ENCODE measurements at regions of chr9 and their contacts with region 1.

Region 1: DNA sequence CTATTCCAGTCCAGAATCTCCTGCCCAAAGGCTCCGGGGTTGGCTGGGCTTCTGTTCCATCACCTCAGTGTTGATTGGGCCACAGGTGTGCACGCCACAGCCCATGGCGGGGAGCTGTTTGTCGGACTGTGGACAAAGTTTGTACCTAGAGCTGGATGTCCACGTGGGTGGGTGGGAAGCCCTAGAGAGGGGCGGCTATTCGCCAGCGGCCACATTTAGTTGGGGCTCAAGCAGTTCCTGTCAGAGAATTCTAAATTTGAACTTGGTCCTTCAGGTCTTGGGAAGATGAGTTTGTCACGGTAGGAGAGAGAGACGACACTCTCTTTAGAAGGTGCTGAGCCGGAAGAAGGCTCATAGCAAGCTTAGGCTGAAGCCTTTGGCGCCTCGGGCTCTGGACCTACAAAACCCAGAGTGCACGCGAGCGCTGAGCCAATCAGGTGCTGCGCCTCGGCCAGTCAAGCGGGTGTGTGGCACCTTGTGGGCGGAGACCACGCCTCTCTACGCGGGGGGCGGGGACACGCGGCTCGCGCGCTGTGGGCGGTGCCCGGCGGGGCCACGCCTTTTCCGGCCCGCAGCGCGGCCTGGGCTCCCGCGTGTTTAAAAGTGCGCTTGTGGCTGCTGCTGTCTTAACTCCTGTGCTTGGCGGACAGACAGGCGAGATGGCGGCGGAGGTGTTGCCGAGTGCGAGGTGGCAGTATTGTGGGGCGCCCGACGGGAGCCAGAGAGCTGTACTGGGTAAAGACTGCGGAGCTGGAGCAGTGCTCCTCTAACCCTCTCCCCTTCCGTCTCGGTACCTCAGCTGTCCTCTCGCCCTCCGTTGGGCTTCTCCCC is at the start of gene POLR1E:
- DNase-seq: peak; percentile 94
- ATAC-seq: peak; percentile 91
- H3K4me3 ChIP-seq: peak within 1 kb of the TSS; percentile 90
- H3K27ac ChIP-seq: peak within 1 kb of the TSS; percentile 38
- H3K4me1 ChIP-seq: peaks cover 28% of the 10 kb centered on the region
- H3K27me3 ChIP-seq: no peaks in the 10 kb centered on the region
- CTCF ChIP-seq: no peak
- total RNA-seq, gene POLR1E: 37.0 and 37.2 TPM in 2 replicates

Region 2: DNA sequence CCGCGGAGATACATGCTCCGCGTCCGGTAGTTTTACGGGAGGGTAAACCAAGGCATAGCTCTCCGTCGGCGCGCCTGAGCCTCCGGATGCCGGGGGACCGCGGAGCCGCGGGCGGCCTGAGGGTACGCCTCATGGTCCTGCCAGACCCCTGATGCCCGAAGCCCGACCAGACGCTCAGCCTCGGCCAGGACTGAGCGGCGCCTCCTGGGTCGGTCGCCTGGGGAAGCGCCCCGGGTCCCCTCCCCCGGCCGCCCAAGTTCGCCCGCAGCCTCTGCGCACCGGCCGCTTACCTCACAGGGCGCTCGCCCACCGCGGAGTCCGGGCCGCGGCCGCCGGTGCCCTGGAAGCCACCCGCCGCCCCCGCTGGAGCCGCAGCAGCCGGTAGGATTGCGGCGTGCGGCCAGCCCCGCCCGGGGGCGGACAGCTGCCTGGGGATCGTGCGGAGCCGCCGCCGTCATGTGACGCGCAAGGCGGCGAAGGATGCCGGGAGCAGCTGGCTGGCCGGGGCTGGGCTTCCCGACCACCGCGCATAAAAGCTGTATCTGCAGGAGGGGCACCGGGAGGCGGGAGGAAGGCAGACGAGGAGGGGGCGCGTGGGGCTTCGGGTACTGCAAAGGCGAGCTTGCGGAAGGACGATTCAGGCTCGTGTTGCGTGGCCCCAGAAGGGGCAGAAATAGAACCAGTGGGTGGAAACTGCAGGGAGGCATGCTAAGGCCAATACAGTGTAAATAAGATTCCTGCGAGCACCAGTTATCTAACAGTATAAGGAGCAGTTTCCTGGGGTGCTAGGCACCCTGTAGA is 90.5 kb after region 1 on chr9 and contains the start of gene FBXO10:
- CTCF ChIA-PET with region 1: no interaction called
- POLR2A ChIA-PET with region 1: no interaction called
- intact Hi-C with region 1: loop called (anchors 10 kb)
- DNase-seq: peak; percentile 36
- ATAC-seq: peak; percentile 82
- H3K4me3 ChIP-seq: peak within 1 kb of the TSS; percentile 70
- H3K27ac ChIP-seq: no peak within 1 kb of the TSS
- H3K4me1 ChIP-seq: no peaks in the 10 kb centered on the region
- H3K27me3 ChIP-seq: no peaks in the 10 kb centered on the region
- CTCF ChIP-seq: no peak
- total RNA-seq, gene FBXO10: 2.6 and 5.1 TPM in 2 replicates

Region 3: DNA sequence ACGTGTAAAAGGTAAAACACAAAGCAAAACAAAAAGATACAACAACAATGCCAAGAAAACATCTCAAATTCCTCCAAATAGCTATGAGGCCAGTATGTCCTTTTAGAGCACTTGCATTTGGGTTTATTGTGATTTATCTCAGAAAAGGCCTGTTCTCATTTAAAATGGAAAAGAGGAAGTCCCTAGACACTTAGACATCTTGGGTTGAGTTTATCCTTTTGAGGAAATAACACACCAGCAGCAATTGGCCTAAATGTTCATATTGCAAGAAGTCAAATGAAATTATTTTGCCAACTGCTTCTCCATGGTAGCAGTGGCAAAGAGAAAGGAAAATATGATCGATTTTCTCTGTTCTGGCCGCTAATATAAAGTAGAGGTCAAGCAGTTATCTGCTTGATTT is 224.4 kb after region 1 on chr9:
- CTCF ChIA-PET with region 1: no interaction called
- POLR2A ChIA-PET with region 1: no interaction called
- intact Hi-C with region 1: no loop called
- DNase-seq: no peak
- ATAC-seq: no peak
- H3K4me3 ChIP-seq: no peak overlapping the region
- H3K27ac ChIP-seq: no peak overlapping the region
- H3K4me1 ChIP-seq: no peaks in the 10 kb centered on the region
- H3K27me3 ChIP-seq: peaks cover 25% of the 10 kb centered on the region
- CTCF ChIP-seq: no peak

Region 4: DNA sequence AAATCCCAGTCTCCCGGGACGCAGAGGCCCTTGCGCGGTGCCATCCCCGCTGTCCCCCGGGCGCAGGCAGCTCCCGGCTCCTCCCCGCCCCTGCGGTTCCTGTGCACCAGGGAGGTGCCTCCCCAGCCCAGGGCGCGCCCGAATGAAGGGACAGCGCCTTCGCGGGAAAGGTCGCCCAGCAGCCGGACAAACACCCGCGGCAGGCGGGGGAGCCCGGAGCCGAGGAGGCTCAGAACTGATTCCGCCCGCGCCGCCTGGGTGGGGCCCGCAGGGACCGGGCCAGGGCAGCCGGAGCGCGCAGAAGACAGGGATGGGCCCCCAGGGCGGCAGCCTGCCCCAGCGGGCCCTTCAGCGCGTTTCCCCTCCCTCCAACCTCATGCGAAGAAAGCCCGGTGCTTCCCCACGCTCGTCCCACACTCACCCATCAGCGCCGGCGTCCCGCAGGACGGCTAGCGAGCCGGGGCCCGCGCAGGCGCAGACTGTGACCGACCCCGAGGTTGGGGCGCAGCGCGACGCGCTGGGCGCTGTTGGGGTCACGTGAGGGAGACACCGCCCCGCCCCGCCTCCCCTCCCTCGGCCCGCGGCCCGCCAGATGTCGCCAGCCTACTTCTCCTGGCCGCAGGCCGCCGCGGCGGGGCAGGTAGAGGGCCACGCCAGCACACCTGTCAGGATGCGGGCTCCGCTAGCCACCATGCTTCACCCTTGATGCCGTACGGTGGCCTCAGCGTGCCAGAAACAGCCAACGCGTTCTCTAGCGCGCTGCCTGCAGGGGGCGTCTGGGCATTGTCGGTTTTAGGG is 418.2 kb after region 1 on chr9 and contains the start of gene SLC25A51:
- CTCF ChIA-PET with region 1: no interaction called
- POLR2A ChIA-PET with region 1: no interaction called
- intact Hi-C with region 1: loop called (anchors 10 kb)
- DNase-seq: peak; percentile 89
- ATAC-seq: peak; percentile 78
- H3K4me3 ChIP-seq: peak within 1 kb of the TSS; percentile 93
- H3K27ac ChIP-seq: peak within 1 kb of the TSS; percentile 71
- H3K4me1 ChIP-seq: peaks cover 19% of the 10 kb centered on the region
- H3K27me3 ChIP-seq: no peaks in the 10 kb centered on the region
- CTCF ChIP-seq: peak; percentile 85
- total RNA-seq, gene SLC25A51: 24.1 and 30.6 TPM in 2 replicates

Region 5: GRCh38 chr9:38277601-38278200 is 792.1 kb after region 1 on chr9:
- CTCF ChIA-PET with region 1: interaction called, 10 read pairs
- POLR2A ChIA-PET with region 1: no interaction called
- intact Hi-C with region 1: no loop called
- DNase-seq: peak; percentile 9
- ATAC-seq: no peak
- H3K4me3 ChIP-seq: no peak overlapping the region
- H3K27ac ChIP-seq: no peak overlapping the region
- H3K4me1 ChIP-seq: no peaks in the 10 kb centered on the region
- H3K27me3 ChIP-seq: no peaks in the 10 kb centered on the region
- CTCF ChIP-seq: no peak